ENCODE measurements at regions of chr2 and their contacts with region 1.

Region 1: GRCh38 chr2:98508709-98509066 is 64.0 kb downstream of the INPP4A start:
- DNase-seq: peak; percentile 95 to 97 (median 97)
- H3K4me3 ChIP-seq: peak overlapping the region in 1 of 3 experiments; percentile 41
- H3K4me3 Mint-ChIP-seq: peak overlapping the region; percentile 62 to 85
- H3K27ac ChIP-seq: peak overlapping the region; percentile 97 to 100
- H3K27ac Mint-ChIP-seq: peak overlapping the region; percentile 99 to 100 (median 100)
- H3K4me1 ChIP-seq: peaks cover 66 to 67% of the 10 kb centered on the region in 2 donors
- H3K4me1 Mint-ChIP-seq: peaks cover 83% of the 10 kb centered on the region
- H3K27me3 ChIP-seq: no peaks in the 10 kb centered on the region
- H3K27me3 Mint-ChIP-seq: peaks cover 0 to 3% (median 1%) of the 10 kb centered on the region in 3 donors
- CTCF ChIP-seq: no peak

Region 2: DNA sequence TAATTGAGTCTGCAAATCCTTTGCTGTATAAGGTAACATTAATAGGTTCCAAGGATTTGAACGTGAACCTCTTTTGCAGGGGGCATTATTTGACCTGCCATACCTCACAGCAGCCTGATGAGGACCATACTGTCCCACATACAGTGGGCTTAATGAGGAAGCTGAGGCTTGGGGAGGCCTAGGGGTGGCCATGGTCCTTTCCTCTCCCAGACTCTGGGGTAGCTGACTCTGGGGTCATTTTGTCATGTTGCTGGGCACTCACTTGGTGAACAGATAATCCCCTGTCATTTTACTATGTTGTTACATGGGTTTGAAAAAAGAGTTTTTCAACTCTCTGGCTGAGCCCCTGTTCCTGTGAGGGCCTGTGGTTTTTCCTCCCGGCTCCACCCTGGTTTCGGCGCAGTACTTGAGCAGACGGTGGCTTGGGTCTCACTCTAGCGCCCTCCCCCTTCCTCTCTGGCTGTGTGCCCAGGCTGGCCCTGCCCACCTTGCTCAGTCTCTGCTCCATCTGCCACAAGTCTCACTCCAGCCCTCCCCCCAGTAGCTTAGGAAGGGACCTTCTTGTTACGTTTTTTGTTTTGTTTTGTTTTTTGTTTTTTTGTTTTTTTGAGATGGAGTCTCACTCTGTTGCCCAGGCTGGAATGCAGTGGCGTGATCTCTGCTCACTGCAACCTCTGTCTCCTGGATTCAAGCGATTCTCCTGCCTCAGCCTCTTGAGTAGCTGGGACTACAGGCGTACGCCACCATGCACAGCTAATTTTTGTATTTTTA is 43.0 kb before region 1 on chr2:
- intact Hi-C with region 1: loop called (anchors 2 to 5 kb)
- DNase-seq: peak; percentile 58 to 68 (median 61)
- H3K4me3 ChIP-seq: peak overlapping the region in 1 of 3 experiments; percentile 42
- H3K4me3 Mint-ChIP-seq: peak overlapping the region; percentile 39 to 74
- H3K27ac ChIP-seq: peak overlapping the region; percentile 93 to 97
- H3K27ac Mint-ChIP-seq: peak overlapping the region; percentile 96 to 99 (median 97)
- H3K4me1 ChIP-seq: peaks cover 87 to 98% of the 10 kb centered on the region in 2 donors
- H3K4me1 Mint-ChIP-seq: peaks cover 90% of the 10 kb centered on the region
- H3K27me3 ChIP-seq: no peaks in the 10 kb centered on the region
- H3K27me3 Mint-ChIP-seq: no peaks in the 10 kb centered on the region
- CTCF ChIP-seq: no peak

Measured in CD14-positive monocyte (primary cell).